ENCODE measurements at regions of chr5 and their contacts with region 1.

Region 1: DNA sequence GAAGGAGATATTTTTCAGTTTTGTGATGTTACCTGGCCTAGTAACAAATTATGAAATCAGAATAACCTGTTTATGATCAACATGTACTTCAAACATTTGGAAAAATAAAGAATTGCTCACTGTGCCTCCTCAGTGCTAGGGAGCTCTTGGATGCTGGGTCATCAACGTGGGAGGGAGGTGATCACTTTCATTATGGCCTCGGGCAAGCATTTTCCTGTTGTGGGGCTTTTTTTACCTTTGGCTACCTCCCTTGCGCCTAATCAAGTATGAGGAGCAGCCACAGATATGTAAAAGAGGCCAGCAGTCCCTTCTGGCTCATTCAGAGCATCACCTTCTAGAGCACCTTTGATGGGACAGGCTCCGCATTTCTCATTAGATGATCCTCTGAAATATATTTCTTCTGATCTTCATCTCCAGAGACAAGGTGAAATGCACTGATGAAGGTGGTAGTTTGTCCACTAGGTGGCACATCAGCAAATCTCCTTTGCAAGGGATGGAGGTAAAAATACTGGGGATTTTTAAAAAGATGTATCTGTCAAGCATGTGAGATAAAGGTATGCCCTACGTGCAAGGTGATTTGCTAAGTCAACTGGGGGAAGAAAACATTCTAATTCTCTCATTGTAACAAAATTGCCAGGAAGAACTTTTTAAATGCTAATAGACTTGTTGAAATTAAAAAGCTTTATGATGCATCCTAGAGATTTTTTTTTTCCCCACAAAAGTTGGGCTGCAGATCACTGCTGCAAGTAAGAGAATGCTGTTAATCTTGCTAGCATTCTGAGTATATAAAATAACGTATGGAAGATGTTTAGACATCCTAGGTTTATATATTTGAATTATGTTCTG is 218.2 kb downstream of the MAST4 start:
- DNase-seq: peak; percentile 60
- H3K4me3 Mint-ChIP-seq: no peak overlapping the region
- H3K27ac Mint-ChIP-seq: no peak overlapping the region
- H3K4me1 Mint-ChIP-seq: peaks cover 21% of the 10 kb centered on the region
- H3K27me3 Mint-ChIP-seq: peaks cover 3% of the 10 kb centered on the region

Region 2: DNA sequence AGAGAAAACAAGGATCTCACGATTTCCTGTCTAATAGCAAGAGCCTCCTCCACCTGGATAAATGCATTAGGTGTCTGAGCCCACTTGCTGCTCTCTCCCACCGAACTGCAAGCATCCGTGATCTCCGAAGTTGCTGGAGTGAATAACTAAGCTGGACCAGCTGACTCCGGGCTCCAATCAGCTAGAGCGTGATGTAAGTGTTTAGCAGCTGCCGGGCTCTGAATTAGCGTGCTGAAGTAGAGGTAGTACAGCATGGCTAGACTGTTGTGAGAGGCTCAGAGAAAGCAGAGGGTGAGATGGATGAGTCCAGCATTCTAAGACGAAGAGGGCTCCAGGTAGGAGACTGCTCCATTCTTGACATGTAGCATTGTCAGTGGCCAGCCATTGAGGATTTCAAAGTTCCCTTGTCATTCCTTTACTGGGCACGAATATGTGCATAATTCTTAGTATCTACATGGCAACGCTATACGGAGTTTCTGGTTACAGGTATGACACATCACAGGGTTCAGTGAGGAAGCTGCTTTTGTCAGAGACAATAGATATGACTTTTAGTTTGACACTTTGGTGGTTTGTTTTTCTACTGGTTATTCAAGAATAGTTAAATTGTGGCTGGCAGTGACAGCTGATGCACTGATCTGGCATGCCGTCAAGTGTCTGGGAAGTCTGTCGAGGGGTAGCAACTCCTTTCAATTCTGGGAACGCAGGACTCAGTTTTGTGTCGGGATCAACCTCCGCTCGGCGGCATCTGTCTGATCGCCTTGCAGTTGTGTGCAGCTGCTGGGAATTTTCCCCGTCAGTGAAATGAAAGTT is 14.4 kb after region 1 on chr5:
- CTCF ChIA-PET with region 1: interaction called, 53 read pairs
- POLR2A ChIA-PET with region 1: interaction called, 30 read pairs
- DNase-seq: peak; percentile 82
- H3K4me3 Mint-ChIP-seq: peak overlapping the region; percentile 86
- H3K27ac Mint-ChIP-seq: peak overlapping the region; percentile 84
- H3K4me1 Mint-ChIP-seq: peaks cover 66% of the 10 kb centered on the region
- H3K27me3 Mint-ChIP-seq: no peaks in the 10 kb centered on the region

Region 3: GRCh38 chr5:66864331-66864840 is 50.0 kb after region 1 on chr5:
- CTCF ChIA-PET with region 1: interaction called, 29 read pairs
- POLR2A ChIA-PET with region 1: no interaction called
- DNase-seq: peak; percentile 28
- H3K4me3 Mint-ChIP-seq: no peak overlapping the region
- H3K27ac Mint-ChIP-seq: no peak overlapping the region
- H3K4me1 Mint-ChIP-seq: peaks cover 33% of the 10 kb centered on the region
- H3K27me3 Mint-ChIP-seq: peaks cover 16% of the 10 kb centered on the region

Measured in activated CD4-positive, alpha-beta memory T cell treated with anti-CD3 and anti-CD28 coated beads, Interleukin-2, amount 10 ng/mL, durations not matched to agents 7 days and 5 days (primary cell).